Dorsolateral prefrontal cortex (tissue), 120 donors: ENCODE measurements at regions of chr3 and their contacts with region 1.

Region 1: DNA sequence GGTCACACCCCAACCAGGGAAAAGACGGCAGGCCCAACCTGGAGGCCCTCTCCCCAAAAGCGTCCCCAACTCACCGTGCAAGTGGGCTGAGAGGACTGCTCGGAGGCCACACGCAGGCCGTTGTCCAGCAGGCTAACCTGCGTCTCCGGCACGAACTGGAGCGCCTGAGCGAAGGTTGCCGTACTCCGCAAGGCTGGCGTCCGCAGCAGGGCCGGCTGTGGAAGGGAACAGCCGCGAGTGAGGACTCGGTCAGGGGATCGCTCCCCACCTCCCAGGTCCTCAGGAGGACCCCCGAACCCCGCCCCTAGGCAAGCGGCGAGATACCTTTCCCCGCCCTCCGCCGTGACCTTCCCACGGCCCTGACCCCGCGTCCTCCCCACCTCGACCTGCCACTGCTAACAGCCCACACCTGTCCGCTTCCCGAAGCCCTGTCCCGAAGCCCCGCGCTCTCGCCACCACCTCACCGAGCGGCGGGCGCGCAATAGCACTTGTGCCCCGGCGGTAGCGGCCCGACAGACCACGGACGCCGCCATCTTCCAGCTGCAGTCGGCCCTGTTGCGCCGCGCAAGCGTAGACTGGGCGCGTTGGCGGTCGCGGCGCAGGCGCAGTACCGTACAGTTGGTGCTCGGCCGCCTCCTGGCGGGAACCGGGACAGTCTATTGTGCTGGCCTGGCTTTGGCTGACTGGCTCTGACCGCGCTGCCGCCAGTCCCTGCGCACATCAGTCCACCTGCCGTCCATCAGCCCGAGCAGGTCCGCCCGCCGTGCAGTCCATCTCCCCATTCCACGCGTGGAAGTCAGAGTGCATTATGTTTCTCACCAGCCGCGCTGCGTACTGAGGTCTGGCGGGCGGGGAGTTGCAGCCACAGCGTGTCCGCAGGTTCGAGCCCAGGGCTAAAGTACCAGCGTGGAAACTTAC is at the start of gene UQCRC1:
- DNase-seq: peak; percentile 83 to 95 (median 87)
- H3K4me3 ChIP-seq: peak within 1 kb of the TSS; percentile 63 to 100 (median 97)
- H3K27ac ChIP-seq: peak within 1 kb of the TSS; percentile 36 to 96 (median 85)
- H3K27me3 ChIP-seq: no peaks in the 10 kb centered on the region
- CTCF ChIP-seq: peak; percentile 23 to 95 (median 86)
- total RNA-seq, gene UQCRC1: 75.3 to 310 (median 207) TPM

Region 2: DNA sequence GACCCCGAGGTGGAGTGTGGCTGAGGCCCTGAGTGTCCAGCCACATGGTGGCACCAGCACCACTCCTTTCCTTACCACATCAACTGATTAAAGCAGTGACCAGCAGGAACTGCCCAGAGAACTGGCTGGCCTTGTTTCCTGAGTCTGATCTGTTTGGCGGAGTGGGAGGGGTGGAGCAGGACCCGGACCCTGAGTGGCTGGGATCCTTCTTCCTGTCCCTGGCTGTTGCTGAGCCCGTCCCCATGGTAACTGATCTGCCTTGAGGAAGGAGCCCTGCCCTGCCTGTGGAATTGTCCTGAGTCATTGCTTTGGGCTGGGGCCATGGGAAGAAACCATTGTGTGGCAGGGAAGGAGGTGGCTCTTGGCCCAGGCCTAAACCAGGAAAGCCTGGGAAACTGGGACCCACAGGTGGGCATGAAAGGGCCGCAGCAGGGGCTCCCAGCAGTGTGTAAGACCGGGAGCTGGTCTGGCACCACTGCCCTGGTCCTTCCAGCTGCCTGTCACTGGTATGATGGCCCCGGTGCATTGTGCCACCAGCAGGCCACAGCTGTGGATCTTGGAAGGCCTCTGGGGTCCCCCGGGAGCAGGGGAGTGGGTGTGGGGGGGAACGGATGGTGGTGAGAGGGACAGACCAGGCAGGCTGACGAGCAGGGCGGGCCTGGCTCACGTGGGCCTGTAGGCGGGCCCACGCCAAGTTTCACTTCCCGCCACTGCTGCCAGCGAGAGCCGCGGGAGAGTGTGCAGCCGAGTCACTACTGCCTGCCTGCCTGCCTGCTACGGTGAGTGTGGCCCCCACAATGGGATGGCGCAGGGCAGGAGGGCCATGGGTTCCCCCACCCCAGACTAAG is 143.6 kb before region 1 on chr3:
- intact Hi-C with region 1: loop called in 1 of 2 experiments (anchors 5 kb)
- DNase-seq: peak; percentile 83 to 99 (median 96)
- H3K4me3 ChIP-seq: peak overlapping the region; percentile 47 to 83 (median 69)
- H3K27ac ChIP-seq: peak overlapping the region; percentile 93 to 100 (median 99)
- H3K27me3 ChIP-seq: no peaks in the 10 kb centered on the region
- CTCF ChIP-seq: peak; percentile 14 to 97 (median 92)

Region 3: DNA sequence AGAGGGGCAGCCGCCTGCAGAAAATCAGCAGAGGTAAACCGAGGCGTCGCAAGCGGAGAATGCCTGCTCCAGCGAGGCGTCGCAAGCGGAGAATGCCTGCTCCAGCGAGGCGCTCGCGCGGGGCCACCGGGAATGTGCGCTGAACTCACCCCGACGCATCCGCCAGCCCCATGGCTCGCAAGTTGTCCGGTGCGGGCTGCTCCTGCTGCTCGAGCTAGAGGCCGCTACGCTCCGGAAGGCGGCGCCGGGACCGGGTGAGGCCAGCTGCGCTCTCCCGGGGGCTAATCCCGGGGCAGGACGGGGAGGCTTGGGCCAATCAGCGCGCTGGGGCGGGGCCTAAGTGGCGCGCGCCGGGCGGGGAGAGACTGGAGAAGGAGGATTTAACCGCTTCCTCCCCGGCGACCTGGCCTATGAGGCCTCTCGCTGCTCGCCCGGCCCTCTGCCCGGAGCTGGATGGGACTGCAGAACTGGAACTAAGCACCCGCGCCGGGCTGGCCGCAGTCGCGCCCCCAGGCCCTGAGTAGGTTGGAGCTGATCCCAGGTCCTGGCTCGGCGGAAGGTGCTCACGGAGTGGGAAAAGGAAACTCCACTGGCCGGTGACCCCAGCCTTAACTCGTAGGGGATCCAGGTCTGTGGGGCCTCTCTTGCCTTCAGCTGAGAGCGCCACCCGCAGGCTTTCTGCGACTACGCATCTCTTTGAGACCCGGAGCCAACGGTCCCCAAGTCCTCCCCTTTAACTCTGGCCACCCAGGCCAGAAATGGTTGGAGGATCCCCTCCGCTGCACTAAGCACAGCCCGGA is 26.1 kb after region 1 on chr3 and contains the start of gene SLC26A6:
- intact Hi-C with region 1: loop called in 1 of 2 experiments (anchors 2 kb)
- DNase-seq: peak; percentile 95 to 99 (median 96)
- H3K4me3 ChIP-seq: peak within 1 kb of the TSS; percentile 71 to 99 (median 90)
- H3K27ac ChIP-seq: peak within 1 kb of the TSS in 52 of 59 donors; percentile 18 to 89 (median 74)
- H3K27me3 ChIP-seq: no peaks in the 10 kb centered on the region
- CTCF ChIP-seq: peak in 55 of 56 donors; percentile 33 to 82 (median 62)
- total RNA-seq, gene SLC26A6: 5.6 to 28.6 (median 13.1) TPM

Region 4: DNA sequence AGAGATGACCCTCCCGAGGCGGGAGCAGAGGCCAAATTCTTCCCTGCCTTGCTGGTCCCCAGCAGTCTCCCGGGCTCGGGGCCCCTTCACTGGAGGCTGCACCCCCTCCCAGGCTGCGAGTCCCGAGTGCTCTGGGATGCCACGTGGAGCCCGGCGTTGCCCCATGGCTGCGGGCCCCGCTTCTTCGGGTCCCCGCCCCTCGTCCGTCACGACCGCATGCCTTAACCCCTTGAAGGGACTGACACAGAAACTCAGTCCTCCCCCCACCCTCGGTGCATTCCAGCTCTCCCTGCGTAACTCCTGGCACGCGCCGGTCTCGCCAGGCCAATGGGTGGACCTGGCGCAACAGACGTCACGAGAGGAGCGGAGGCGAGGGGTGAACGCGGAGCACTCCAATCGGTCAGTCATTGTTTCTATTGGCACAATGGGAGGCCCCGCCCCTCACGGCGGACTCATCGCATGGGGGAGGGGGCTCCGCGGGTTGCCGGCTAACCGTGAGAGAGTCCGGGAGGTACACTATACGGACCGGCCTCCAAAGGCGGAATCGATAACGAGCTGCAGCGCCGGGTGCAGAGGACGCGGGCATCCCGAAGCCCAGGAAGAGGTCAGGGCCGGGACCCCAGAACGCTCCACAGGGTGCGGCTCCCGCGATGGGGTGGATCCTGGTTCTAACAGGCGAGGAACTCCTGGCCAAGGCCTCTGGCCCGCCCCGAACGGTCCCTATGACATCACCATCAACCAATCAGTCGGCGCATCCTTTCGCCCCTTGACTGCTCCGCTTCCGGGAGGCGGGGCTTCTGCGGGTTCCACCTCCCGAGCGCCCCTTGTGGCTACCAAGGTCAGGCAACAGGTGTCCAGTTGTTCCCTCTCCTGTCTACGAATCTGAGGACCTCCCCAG is 54.3 kb after region 1 on chr3:
- intact Hi-C with region 1: loop called in 1 of 2 experiments (anchors 5 kb)
- DNase-seq: peak; percentile 90 to 98 (median 97)
- H3K4me3 ChIP-seq: peak overlapping the region; percentile 48 to 89 (median 71)
- H3K27ac ChIP-seq: peak overlapping the region; percentile 11 to 96 (median 88)
- H3K27me3 ChIP-seq: peaks cover 0 to 5% (median 0%) of the 10 kb centered on the region in 45 donors
- CTCF ChIP-seq: peak; percentile 44 to 93 (median 80)